ENCODE measurements at regions of chr13 and their contacts with region 1.

Region 1: DNA sequence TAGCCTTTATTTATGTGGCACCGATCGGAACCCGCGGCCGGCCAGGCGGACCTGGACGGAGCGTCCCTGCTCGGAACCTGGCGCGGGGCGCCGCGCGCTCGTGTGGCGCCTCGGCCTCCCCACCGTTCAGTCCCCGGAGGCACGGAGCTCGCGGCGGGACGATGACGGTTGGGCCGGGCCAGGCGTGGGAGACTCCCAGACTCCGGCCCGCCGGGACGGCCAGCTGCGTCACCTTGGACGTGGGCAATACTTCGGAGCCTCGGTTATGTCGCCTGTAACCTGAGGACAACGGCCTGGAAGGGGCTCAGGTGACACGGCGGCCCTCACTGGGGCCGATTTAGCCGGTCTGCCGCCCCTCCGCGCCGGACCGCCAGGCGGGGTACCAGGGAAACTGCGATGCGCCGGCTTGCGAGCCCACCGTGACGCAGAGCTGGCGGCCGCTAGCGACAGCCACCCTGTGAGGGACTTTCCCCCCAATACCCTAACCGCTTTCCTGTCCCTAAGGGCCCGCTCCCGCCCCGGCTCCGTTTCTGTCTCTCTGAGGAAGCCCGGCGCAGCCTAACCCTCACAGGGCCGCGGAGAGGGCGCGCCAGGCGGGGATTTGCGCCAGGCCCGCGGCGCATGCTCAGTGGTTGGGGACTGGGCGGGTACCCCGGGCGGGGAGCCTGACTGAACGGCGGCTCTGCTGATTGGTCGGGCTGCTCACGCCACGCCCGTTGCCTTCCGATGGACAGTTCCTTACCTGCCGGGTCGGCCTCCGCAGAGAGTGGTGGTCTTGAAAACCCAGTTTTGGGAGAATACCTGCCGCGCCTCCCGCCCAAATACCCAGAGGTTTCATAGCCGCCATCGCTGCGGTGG is 109.5 kb upstream of the DOCK9 start:
- DNase-seq: peak; percentile 92
- ATAC-seq: peak; percentile 81
- H3K4me3 Mint-ChIP-seq: peak overlapping the region; percentile 98
- H3K27ac Mint-ChIP-seq: peak overlapping the region; percentile 96
- H3K4me1 Mint-ChIP-seq: peaks cover 32% of the 10 kb centered on the region
- H3K27me3 Mint-ChIP-seq: peaks cover 2% of the 10 kb centered on the region
- CTCF ChIP-seq: no peak

Region 2: GRCh38 chr13:97460004-97460775 is 1627.1 kb before region 1 on chr13:
- CTCF ChIA-PET with region 1: no interaction called
- POLR2A ChIA-PET with region 1: no interaction called
- intact Hi-C with region 1: loop called (anchors 10 kb)
- DNase-seq: no peak
- ATAC-seq: peak; percentile 95
- H3K4me3 Mint-ChIP-seq: peak overlapping the region; percentile 57
- H3K27ac Mint-ChIP-seq: peak overlapping the region; percentile 89
- H3K4me1 Mint-ChIP-seq: peaks cover 39% of the 10 kb centered on the region
- H3K27me3 Mint-ChIP-seq: no peaks in the 10 kb centered on the region
- CTCF ChIP-seq: no peak

Region 3: GRCh38 chr13:98706446-98707110 is 380.7 kb before region 1 on chr13:
- CTCF ChIA-PET with region 1: no interaction called
- POLR2A ChIA-PET with region 1: no interaction called
- intact Hi-C with region 1: no loop called
- DNase-seq: no peak
- ATAC-seq: peak; percentile 56
- H3K4me3 Mint-ChIP-seq: peak overlapping the region; percentile 3
- H3K27ac Mint-ChIP-seq: no peak overlapping the region
- H3K4me1 Mint-ChIP-seq: peaks cover 22% of the 10 kb centered on the region
- H3K27me3 Mint-ChIP-seq: peaks cover 9% of the 10 kb centered on the region
- CTCF ChIP-seq: no peak

Region 4: DNA sequence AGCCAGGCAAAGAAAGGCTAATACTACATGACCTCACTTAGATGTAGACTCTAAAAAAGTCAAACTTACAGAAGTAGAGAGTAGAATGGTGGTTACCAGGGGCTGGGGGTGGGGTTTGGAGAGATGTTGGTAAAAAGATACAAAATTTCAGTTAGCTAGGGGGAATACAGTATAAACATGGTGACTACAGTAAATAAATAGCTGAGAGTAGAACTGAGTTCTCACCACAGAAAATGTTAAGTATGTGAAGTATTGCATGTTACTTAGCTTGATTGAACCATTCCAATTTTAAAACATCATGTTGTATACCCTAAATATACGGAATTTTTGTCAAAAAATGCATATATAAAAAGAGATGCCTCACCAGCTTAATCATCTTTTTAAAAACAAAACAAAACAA is 41.9 kb before region 1 on chr13:
- CTCF ChIA-PET with region 1: no interaction called
- POLR2A ChIA-PET with region 1: no interaction called
- intact Hi-C with region 1: loop called (anchors 5 kb)
- DNase-seq: no peak
- ATAC-seq: no peak
- H3K4me3 Mint-ChIP-seq: no peak overlapping the region
- H3K27ac Mint-ChIP-seq: no peak overlapping the region
- H3K4me1 Mint-ChIP-seq: peaks cover 23% of the 10 kb centered on the region
- H3K27me3 Mint-ChIP-seq: peaks cover 60% of the 10 kb centered on the region
- CTCF ChIP-seq: no peak

Region 5: GRCh38 chr13:99200432-99201167 is 113.3 kb after region 1 on chr13 and contains the start of gene UBAC2:
- CTCF ChIA-PET with region 1: no interaction called
- POLR2A ChIA-PET with region 1: interaction called, 9 read pairs
- intact Hi-C with region 1: loop called (anchors 1 kb)
- DNase-seq: peak; percentile 98
- ATAC-seq: peak; percentile 74
- H3K4me3 Mint-ChIP-seq: peak within 1 kb of the TSS; percentile 95
- H3K27ac Mint-ChIP-seq: peak within 1 kb of the TSS; percentile 94
- H3K4me1 Mint-ChIP-seq: peaks cover 59% of the 10 kb centered on the region
- H3K27me3 Mint-ChIP-seq: no peaks in the 10 kb centered on the region
- CTCF ChIP-seq: no peak
- total RNA-seq, gene UBAC2: 40.6 and 51.0 TPM in 2 replicates

Region 6: GRCh38 chr13:99501184-99501847 is 414.0 kb after region 1 on chr13 and contains the start of gene TM9SF2:
- CTCF ChIA-PET with region 1: no interaction called
- POLR2A ChIA-PET with region 1: no interaction called
- intact Hi-C with region 1: loop called (anchors 1 kb)
- DNase-seq: peak; percentile 98
- ATAC-seq: peak; percentile 61
- H3K4me3 Mint-ChIP-seq: peak within 1 kb of the TSS; percentile 97
- H3K27ac Mint-ChIP-seq: peak within 1 kb of the TSS; percentile 97
- H3K4me1 Mint-ChIP-seq: peaks cover 84% of the 10 kb centered on the region
- H3K27me3 Mint-ChIP-seq: no peaks in the 10 kb centered on the region
- CTCF ChIP-seq: no peak
- total RNA-seq, gene TM9SF2: 68.1 and 76.0 TPM in 2 replicates

Region 7: GRCh38 chr13:100588331-100589177 is 1501.2 kb after region 1 on chr13 and contains the start of gene GGACT:
- CTCF ChIA-PET with region 1: no interaction called
- POLR2A ChIA-PET with region 1: no interaction called
- intact Hi-C with region 1: loop called (anchors 10 kb)
- DNase-seq: peak; percentile 80
- ATAC-seq: peak; percentile 95
- H3K4me3 Mint-ChIP-seq: peak within 1 kb of the TSS; percentile 80
- H3K27ac Mint-ChIP-seq: peak within 1 kb of the TSS; percentile 65
- H3K4me1 Mint-ChIP-seq: peaks cover 14% of the 10 kb centered on the region
- H3K27me3 Mint-ChIP-seq: no peaks in the 10 kb centered on the region
- CTCF ChIP-seq: no peak
- total RNA-seq, gene GGACT: 6.5 and 7.5 TPM in 2 replicates

Measured in activated B cell treated with CpG ODN at 0.5 μM for 24 hours (primary cell).